K562 (cell line): ENCODE measurements at regions of chr11 and their contacts with region 1.

Region 1: GRCh38 chr11:48172818-48173609 is 43.6 kb upstream of the OR4B1 start:
- DNase-seq: peak; percentile 75 to 82 (median 77)
- ATAC-seq: peak; percentile 96
- H3K4me3 ChIP-seq: no peak overlapping the region
- H3K27ac ChIP-seq: no peak overlapping the region
- H3K4me1 ChIP-seq: no peaks in the 10 kb centered on the region; a peak in 2 of 5 replicates
- H3K27me3 ChIP-seq: peaks cover 0 to 10% of the 10 kb centered on the region in 2 experiments; a peak in 2 of 5 replicates
- CTCF ChIP-seq: peak; percentile 86 to 93 (median 87)
- EP300 ChIP-seq: no peak
- POLR2A ChIP-seq: no peak
- RAD21 ChIP-seq: peak; percentile 77 to 89

Region 2: DNA sequence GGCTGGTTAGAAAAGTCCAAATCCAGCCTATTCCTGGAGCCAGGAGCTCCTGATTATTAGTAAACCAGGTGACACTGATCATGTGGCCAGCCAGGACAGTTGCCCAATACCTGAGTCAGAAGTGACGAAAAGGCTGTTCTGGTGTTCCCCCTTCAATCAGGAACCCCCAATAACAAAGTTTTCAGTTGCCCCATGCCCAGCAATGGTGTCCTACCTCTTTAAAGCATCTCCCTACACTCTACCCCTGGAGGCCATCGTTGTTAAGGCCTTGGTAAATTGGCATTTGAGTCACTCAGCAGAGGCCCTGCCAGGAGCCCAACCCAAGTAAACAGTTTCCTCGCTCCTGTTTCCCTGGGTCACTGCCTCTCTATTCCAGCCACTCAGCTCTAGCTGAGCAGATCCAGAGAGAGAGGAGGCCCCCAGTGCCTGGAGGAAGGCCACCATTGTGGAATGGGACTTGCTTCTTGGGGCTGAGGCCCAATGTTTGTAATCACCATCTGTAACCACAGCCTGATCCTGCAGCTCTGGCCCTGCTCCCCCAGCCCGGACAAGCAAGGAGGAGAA is 1497.6 kb before region 1 on chr11:
- CTCF ChIA-PET with region 1: no interaction called
- POLR2A ChIA-PET with region 1: no interaction called
- in situ Hi-C with region 1: no loop called
- intact Hi-C with region 1: no loop called
- DNase-seq: no peak
- ATAC-seq: peak; percentile 6; the same call in 2 of the 3 replicates
- H3K4me3 ChIP-seq: no peak overlapping the region
- H3K27ac ChIP-seq: no peak overlapping the region
- H3K4me1 ChIP-seq: peaks cover 0 to 4% of the 10 kb centered on the region in 2 experiments; a peak in 1 of 5 replicates
- H3K27me3 ChIP-seq: no peaks in the 10 kb centered on the region
- CTCF ChIP-seq: no peak
- EP300 ChIP-seq: no peak
- POLR2A ChIP-seq: no peak
- RAD21 ChIP-seq: no peak

Region 3: DNA sequence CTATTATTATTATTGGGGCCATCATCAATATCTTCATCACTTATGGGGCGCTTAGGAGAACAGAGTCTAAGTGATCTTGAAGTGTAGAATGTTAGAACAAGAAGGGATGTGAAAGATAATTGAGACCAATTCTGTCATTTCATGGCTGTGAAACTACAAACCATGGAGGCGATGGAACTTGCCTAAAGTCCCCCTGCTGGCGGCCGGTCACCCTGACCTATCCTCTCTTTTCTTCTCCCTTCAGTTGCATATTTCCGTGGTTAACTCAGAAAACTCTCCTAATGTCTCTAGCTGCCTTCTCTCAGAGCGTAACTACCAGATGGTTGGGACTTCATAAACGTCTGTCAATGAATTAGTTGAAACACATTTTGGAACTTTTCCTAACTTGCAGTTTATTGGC is 37.0 kb after region 1 on chr11:
- CTCF ChIA-PET with region 1: interaction called, 3 read pairs
- POLR2A ChIA-PET with region 1: no interaction called
- in situ Hi-C with region 1: no loop called
- intact Hi-C with region 1: loop called (anchors 1 kb)
- DNase-seq: peak in 2 of 4 experiments; percentile 11 to 15
- ATAC-seq: peak; percentile 77
- H3K4me3 ChIP-seq: no peak overlapping the region
- H3K27ac ChIP-seq: no peak overlapping the region
- H3K4me1 ChIP-seq: no peaks in the 10 kb centered on the region
- H3K27me3 ChIP-seq: no peaks in the 10 kb centered on the region
- CTCF ChIP-seq: peak in 2 of 3 experiments; percentile 35 to 39; a peak in 3 of 6 replicates
- EP300 ChIP-seq: no peak
- POLR2A ChIP-seq: no peak
- RAD21 ChIP-seq: peak in 1 of 2 experiments; percentile 30; a peak in 1 of 4 replicates

Region 4: DNA sequence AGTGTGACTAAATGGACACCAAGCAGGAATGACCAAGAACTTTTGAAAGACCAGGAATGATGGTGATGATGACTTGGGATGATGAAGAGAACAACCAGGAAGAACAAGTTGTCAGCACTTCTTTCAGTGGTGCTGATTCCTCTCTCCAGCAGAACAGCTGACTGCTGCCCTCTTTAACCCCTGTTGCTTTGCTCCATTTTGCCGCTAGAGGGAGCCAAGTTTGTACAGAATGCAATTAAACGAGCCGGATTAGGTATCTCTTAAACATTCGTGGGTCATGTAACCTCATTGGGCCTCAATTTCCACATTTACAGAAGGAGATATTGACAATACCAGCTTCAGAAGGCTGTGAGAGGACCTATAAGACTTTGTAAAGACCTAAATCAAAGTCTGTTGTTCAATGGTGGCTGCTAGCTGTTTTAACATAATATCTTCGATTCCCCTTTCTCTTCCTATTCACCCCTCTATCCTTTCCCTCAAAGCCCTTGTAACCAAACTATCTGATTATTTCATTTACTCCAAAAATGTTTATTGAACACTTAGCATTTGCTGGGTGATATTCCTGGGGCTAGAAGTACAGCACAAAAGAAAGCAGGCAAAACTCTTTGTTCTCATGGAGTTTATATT is 134.9 kb after region 1 on chr11:
- CTCF ChIA-PET with region 1: no interaction called
- POLR2A ChIA-PET with region 1: no interaction called
- in situ Hi-C with region 1: no loop called
- intact Hi-C with region 1: loop called (anchors 2 kb)
- DNase-seq: peak; percentile 36 to 65 (median 48)
- ATAC-seq: peak; percentile 83
- H3K4me3 ChIP-seq: no peak overlapping the region
- H3K27ac ChIP-seq: no peak overlapping the region
- H3K4me1 ChIP-seq: no peaks in the 10 kb centered on the region
- H3K27me3 ChIP-seq: no peaks in the 10 kb centered on the region
- CTCF ChIP-seq: peak; percentile 70 to 78 (median 72)
- EP300 ChIP-seq: no peak
- POLR2A ChIP-seq: no peak
- RAD21 ChIP-seq: peak; percentile 66 to 81

Region 5: GRCh38 chr11:49995565-49995964 is 1822.6 kb after region 1 on chr11:
- CTCF ChIA-PET with region 1: interaction called, 3 read pairs
- POLR2A ChIA-PET with region 1: no interaction called
- in situ Hi-C with region 1: no loop called
- intact Hi-C with region 1: loop called (anchors 2 kb)
- DNase-seq: peak; percentile 19 to 84 (median 42)
- ATAC-seq: peak; percentile 74
- H3K4me3 ChIP-seq: no peak overlapping the region
- H3K27ac ChIP-seq: no peak overlapping the region
- H3K4me1 ChIP-seq: no peaks in the 10 kb centered on the region
- H3K27me3 ChIP-seq: no peaks in the 10 kb centered on the region
- CTCF ChIP-seq: peak; percentile 56 to 71 (median 69)
- EP300 ChIP-seq: no peak
- POLR2A ChIP-seq: no peak
- RAD21 ChIP-seq: peak; percentile 26 to 80; a peak in 2 of 4 replicates